HEK293 (cell line): ENCODE measurements at regions of chr5 and their contacts with region 1.

Region 1: GRCh38 chr5:18455521-18455920 is 821.3 kb downstream of the TAF11L14 start:
- H3K4me3 ChIP-seq: no peak overlapping the region
- H3K27ac ChIP-seq: no peak overlapping the region
- H3K4me1 ChIP-seq: no peaks in the 10 kb centered on the region
- CTCF ChIP-seq: no peak

Region 2: GRCh38 chr5:18465833-18466591 is 10.5 kb after region 1 on chr5:
- CTCF ChIA-PET with region 1: interaction called, 15 read pairs
- POLR2A ChIA-PET with region 1: no interaction called
- H3K4me3 ChIP-seq: no peak overlapping the region
- H3K27ac ChIP-seq: no peak overlapping the region
- H3K4me1 ChIP-seq: no peaks in the 10 kb centered on the region
- CTCF ChIP-seq: peak; percentile 47